A549 (cell line): ENCODE measurements at regions of chr5 and their contacts with region 1.

Region 1: GRCh38 chr5:177362610-177363507 is 5.1 kb downstream of the RGS14 start:
- DNase-seq: peak; percentile 47 to 79
- ATAC-seq: peak; percentile 76 to 87
- H3K4me3 ChIP-seq: peak overlapping the region; percentile 54
- H3K27ac ChIP-seq: peak overlapping the region; percentile 54 to 83; a peak in 5 of 6 replicates
- H3K4me1 ChIP-seq: peaks cover 3% of the 10 kb centered on the region; the same call in 1 of the 3 replicates
- CTCF ChIP-seq: no peak
- EP300 ChIP-seq: no peak
- POLR2A ChIP-seq: no peak
- RAD21 ChIP-seq: no peak

Region 2: DNA sequence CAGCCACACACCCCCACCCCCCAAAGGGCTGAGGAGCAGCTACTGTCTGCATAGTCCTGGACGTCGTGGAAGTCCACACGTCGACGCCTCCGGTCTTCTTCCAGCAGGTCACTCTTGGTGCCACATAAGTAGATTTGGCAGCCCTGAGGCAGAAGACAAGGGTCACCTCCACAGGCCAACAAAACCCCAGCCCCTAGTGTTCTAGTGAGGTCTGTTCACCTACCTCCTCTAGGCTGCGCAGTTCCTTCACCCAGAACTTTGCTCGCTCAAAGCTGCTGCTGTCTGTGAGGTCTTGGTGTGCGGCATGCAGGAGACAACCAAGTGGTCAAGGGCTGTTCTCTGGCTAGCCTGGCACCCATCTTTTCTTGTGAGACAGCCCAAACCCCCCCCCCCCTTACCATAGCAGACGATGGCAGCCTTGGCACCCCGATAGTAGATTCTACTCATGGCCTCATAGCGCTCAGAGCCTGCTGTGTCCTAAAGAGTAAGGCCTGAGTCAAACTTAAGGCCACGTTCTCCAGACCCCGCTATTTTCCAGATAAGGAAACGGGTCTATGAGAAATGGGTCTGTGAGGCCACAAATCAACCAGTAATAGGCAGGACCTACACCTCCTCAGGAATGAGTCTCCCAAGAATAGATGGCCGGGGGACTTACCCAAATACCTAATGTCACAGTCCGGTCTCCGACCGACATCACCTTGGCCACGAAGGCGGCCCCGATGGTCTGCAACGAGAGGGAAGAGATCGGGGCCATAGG is 60.3 kb before region 1 on chr5:
- CTCF ChIA-PET with region 1: no interaction called
- POLR2A ChIA-PET with region 1: no interaction called
- DNase-seq: no peak
- ATAC-seq: peak; percentile 3 to 35; a peak in 3 of 6 replicates
- H3K4me3 ChIP-seq: peak overlapping the region; percentile 68
- H3K27ac ChIP-seq: peak overlapping the region; percentile 95 to 96
- H3K4me1 ChIP-seq: peaks cover 42% of the 10 kb centered on the region
- CTCF ChIP-seq: no peak
- EP300 ChIP-seq: no peak
- POLR2A ChIP-seq: no peak
- RAD21 ChIP-seq: no peak

Region 3: DNA sequence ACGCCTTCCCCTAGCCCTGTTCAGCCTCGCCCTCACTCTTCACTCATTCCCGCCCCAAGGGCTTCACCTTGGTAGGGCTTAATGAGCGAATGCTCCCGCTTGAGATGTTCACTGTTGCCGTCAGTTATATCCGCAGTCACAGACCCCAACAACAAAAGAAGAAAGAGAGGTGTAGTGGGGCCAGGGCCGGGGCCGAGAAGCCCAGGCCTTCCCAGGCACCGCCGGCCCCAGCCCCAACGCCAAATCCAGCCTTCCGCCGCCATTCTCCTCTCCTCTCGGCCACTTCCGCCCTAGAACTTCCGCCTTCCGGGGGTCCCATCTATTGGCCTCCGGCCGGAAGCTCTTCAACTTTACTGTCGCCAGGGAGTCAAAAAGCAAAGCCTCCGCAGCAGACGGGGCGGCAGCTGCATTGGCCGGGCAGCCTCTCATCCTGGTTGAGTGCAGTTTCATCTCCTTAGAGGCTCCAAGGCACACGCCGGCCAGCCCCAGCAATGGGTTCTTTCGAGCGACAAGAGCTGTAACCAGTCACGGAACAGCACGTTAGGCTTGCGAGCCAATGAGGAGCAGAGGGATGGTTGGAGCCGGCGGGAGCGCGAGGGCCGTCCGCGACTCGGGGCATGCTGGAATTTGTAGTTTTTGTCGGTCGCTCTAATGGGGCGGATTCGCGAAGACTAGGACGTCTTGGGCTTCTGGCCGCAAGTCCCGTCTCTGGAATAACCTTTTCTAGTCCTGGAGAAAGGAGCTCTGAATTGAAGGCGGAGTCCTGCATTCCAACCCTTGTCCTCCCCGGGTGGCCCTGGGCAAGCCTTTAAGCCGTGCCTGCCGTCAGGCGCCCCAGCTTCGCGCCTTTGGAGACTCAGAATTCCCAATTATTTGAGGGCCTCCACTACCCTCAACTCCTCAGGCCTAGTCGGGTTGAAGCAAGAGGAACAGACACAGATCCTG is 11.2 kb before region 1 on chr5 and contains the start of gene LMAN2:
- CTCF ChIA-PET with region 1: interaction called, 27 read pairs
- POLR2A ChIA-PET with region 1: interaction called, 8 read pairs
- DNase-seq: peak; percentile 94 to 97
- ATAC-seq: peak; percentile 98 to 99
- H3K4me3 ChIP-seq: peak within 1 kb of the TSS; percentile 78
- H3K27ac ChIP-seq: peak within 1 kb of the TSS; percentile 90 to 94
- H3K4me1 ChIP-seq: peaks cover 31% of the 10 kb centered on the region
- CTCF ChIP-seq: no peak
- EP300 ChIP-seq: no peak
- POLR2A ChIP-seq: peak; percentile 73
- RAD21 ChIP-seq: no peak
- polyA plus RNA-seq, gene LMAN2: 123 and 172 TPM in 2 replicates